Aorta (tissue), 5 donors: ENCODE measurements at regions of chr19 and their contacts with region 1.

Region 1: GRCh38 chr19:7340959-7341837 is 7.5 kb upstream of the ARHGEF18 start:
- DNase-seq: peak; percentile 80 to 95
- ATAC-seq: peak; percentile 73
- H3K4me3 ChIP-seq: no peak overlapping the region
- H3K27ac ChIP-seq: no peak overlapping the region
- H3K4me1 ChIP-seq: no peaks in the 10 kb centered on the region
- H3K27me3 ChIP-seq: no peaks in the 10 kb centered on the region

Region 2: DNA sequence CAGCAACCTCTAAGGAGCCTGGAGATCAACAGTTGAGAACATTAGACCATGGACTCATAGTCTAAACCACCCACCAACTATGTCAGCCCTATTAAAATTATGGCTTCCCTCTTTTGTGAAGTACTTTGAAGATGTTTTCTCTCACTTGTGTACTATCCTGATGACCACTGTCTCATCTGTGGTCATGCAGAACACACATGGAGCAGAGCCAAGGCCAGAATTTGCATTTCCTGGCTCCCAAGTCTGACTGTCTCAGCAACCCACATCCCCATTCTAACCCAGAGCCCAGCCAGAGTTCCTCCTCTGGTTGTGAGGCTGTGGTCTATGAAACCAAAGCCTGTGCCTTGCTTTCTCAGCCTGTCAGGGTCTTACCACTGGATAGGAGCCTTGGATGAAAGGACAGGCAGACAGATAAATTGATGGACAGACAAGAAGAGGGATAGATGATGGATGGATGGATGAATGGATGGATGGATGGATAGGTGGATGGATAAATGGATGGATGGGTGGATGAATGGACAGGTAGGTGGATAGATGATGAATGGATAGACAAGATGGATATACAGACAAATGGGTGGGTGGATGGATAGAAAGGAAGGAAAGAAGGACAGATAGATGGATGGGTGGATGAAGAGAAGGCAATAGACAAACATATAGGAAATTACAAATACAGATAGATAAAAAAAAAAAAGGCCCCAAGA is 236.3 kb before region 1 on chr19:
- intact Hi-C with region 1: loop called (anchors 1 to 5 kb)
- DNase-seq: peak in 1 of 2 donors; percentile 71
- ATAC-seq: no peak
- H3K4me3 ChIP-seq: no peak overlapping the region
- H3K27ac ChIP-seq: no peak overlapping the region
- H3K4me1 ChIP-seq: no peaks in the 10 kb centered on the region
- H3K27me3 ChIP-seq: no peaks in the 10 kb centered on the region

Region 3: GRCh38 chr19:7145494-7146485 is 195.4 kb before region 1 on chr19:
- intact Hi-C with region 1: loop called (anchors 2 to 5 kb)
- DNase-seq: peak in 1 of 2 donors; percentile 12
- ATAC-seq: no peak
- H3K4me3 ChIP-seq: no peak overlapping the region
- H3K27ac ChIP-seq: no peak overlapping the region
- H3K4me1 ChIP-seq: no peaks in the 10 kb centered on the region
- H3K27me3 ChIP-seq: no peaks in the 10 kb centered on the region

Region 4: GRCh38 chr19:7152568-7152967 is 188.6 kb before region 1 on chr19:
- intact Hi-C with region 1: loop called (anchors 2 to 5 kb)
- DNase-seq: peak in 1 of 2 donors; percentile 51
- ATAC-seq: no peak
- H3K4me3 ChIP-seq: no peak overlapping the region
- H3K27ac ChIP-seq: no peak overlapping the region
- H3K4me1 ChIP-seq: no peaks in the 10 kb centered on the region
- H3K27me3 ChIP-seq: no peaks in the 10 kb centered on the region

Region 5: DNA sequence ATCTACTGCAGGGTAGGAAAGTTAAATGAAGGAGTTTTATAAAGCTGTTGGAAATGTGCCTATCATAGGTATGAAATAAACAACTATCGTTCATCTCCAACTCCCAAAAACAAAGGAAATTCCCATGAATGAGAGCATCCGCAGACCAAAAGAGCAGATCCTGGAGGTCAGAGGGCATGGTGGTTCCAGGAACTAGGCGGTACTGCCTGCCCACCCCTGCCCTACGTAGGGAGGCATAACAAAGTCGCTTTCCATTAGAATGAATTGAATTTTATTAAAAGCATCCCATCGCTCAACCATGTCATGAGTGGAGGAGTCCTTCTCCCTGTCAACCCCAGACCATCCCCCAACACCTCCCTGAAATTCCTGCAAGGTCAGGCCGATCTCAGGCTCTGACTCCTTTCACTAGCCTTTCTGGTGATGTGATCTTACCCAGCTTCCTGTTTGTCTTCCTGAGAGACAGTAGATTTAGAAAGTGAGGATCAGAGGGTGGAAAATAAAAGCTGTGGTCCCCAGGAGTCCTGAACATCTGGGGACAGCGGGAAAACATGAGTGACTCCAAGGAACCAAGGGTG is 421.6 kb after region 1 on chr19 and contains the start of gene CLEC4M:
- intact Hi-C with region 1: no loop called
- DNase-seq: no peak
- ATAC-seq: no peak
- H3K4me3 ChIP-seq: no peak within 1 kb of the TSS
- H3K27ac ChIP-seq: no peak within 1 kb of the TSS
- H3K4me1 ChIP-seq: no peaks in the 10 kb centered on the region
- H3K27me3 ChIP-seq: no peaks in the 10 kb centered on the region
- total RNA-seq, gene CLEC4M: not detected